Right ventricle myocardium inferior (tissue), 1 donor: ENCODE measurements at regions of chr12 and their contacts with region 1.

Region 1: DNA sequence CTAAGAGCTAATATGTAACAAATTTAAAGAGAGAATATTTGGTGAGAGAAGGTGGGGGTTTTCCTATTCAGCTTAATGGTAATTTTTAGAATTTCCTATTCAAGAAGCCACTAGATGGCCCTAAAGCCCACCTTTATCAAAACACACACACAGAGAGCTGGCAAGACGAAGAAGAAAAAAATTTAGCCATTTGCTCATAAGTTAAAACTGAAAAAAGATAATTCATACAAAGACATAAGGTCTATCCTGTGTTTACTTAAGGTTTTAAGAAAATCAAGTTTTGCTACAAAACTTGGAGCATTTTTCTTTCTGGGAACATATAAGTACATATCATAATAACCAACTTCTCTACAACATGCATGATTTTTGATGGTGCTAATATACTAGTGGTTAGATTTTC is 46.8 kb upstream of the PCED1B start:
- DNase-seq: no peak
- ATAC-seq: peak; percentile 67

Region 2: DNA sequence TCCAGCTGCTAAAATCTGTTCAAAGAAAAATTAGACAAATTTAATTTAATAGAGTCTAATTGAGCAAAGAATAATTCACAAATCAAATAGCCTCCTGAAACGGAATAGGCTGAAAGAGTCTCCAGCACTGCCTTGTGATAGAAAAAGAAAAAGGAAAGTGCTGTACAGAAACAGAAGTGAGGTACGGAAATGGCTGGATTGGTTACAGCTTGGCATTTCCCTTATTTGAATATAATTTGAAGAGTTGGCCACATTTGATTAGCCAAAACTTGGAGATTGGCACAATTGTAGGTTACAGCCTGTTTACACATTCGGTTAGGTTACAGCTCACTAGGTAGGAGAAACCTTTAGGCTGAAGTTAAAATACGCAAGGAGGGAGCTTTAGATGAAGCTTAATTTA is 22.0 kb after region 1 on chr12:
- intact Hi-C with region 1: no loop called
- DNase-seq: no peak
- ATAC-seq: no peak

Region 3: GRCh38 chr12:47095446-47096236 is 63.0 kb after region 1 on chr12:
- intact Hi-C with region 1: no loop called
- DNase-seq: no peak
- ATAC-seq: no peak

Region 4: GRCh38 chr12:47307680-47308399 is 275.2 kb after region 1 on chr12:
- intact Hi-C with region 1: loop called (anchors 5 kb)
- DNase-seq: no peak
- ATAC-seq: peak; percentile 73

Region 5: GRCh38 chr12:47397664-47398281 is 365.1 kb after region 1 on chr12:
- intact Hi-C with region 1: loop called (anchors 5 kb)
- DNase-seq: no peak
- ATAC-seq: peak; percentile 74

Region 6: GRCh38 chr12:47686645-47687240 is 654.1 kb after region 1 on chr12:
- intact Hi-C with region 1: loop called (anchors 5 kb)
- DNase-seq: no peak
- ATAC-seq: no peak